OCI-LY7 (cell line): ENCODE measurements at regions of chr5 and their contacts with region 1.

Region 1: DNA sequence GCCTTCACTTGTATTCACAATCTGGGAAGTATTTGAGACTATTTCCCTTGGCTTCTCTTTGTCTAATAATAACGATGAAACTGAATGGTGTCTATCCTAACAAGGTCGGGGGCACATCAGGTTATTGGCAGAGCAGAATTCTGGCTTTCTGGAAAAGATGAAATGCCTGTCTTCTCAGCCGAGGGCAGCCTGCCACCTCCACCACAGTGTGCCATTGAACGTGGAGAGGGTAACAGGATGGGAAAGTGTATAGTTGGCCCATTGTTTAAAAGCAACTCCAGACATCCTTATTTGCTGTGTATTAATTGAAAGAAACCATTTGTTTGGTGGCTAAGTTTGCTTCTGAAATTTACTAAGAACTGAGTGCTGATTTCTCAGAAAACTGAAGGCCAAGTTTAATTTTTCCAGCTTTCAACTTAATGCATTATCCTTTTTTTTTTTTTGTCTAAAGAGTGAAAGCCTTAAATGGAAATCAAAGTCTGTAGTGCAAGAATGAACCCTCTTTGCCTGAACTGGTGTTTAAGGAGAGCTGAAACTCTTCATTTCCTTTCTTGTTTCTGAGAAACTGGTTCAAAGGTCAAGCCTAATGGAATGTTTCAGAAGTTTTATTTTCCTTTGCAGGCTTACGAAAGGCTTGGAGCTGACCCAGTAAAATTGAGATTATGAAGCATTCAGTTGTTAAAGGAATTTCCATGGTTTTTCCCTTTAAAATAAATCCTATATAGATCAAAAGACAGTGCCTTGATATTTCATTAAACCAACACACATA is 563.7 kb upstream of the DAP start:
- DNase-seq: no peak
- H3K4me3 ChIP-seq: no peak overlapping the region
- H3K27ac ChIP-seq: no peak overlapping the region
- H3K4me1 ChIP-seq: no peaks in the 10 kb centered on the region
- CTCF ChIP-seq: no peak

Region 2: GRCh38 chr5:11247224-11247623 is 77.5 kb before region 1 on chr5:
- CTCF ChIA-PET with region 1: no interaction called
- POLR2A ChIA-PET with region 1: no interaction called
- intact Hi-C with region 1: no loop called
- DNase-seq: no peak
- H3K4me3 ChIP-seq: no peak overlapping the region
- H3K27ac ChIP-seq: no peak overlapping the region
- H3K4me1 ChIP-seq: no peaks in the 10 kb centered on the region
- CTCF ChIP-seq: no peak

Region 3: DNA sequence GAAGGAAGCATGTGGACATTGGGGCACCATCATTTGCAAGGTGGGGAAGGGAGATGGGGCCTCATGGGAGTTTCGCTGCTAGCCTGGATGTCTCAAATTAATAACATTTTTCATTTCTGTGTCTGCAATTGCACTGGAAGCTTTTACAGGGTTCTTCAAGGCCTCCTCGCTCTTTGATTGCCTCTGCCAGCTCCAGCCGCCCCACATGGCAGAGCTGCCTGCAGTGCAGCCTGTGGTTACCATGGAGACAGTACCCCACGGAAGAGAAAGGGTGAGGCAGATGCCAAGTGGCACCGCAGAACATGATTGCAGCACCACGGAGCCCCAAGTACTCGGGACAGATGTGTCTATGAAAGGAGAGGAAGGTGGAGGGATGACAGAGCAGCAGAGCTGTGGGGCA is 554.1 kb after region 1 on chr5:
- CTCF ChIA-PET with region 1: no interaction called
- POLR2A ChIA-PET with region 1: interaction called, 10 read pairs
- intact Hi-C with region 1: no loop called
- DNase-seq: no peak
- H3K4me3 ChIP-seq: no peak overlapping the region
- H3K27ac ChIP-seq: no peak overlapping the region
- H3K4me1 ChIP-seq: no peaks in the 10 kb centered on the region
- CTCF ChIP-seq: no peak